ENCODE measurements at regions of chr12 and their contacts with region 1.

Region 1: GRCh38 chr12:27244684-27245488 is 800 bp downstream of the STK38L start:
- DNase-seq: no peak
- H3K4me3 ChIP-seq: peak overlapping the region; percentile 63 to 82 (median 68)
- H3K27ac ChIP-seq: peak overlapping the region; percentile 17 to 87 (median 78)
- H3K4me1 ChIP-seq: peaks cover 11 to 23% of the 10 kb centered on the region in 2 donors
- H3K27me3 ChIP-seq: no peaks in the 10 kb centered on the region
- CTCF ChIP-seq: no peak
- POLR2A ChIP-seq: no peak

Region 2: GRCh38 chr12:27064397-27065342 is 180.2 kb before region 1 on chr12:
- intact Hi-C with region 1: no loop called
- DNase-seq: no peak
- H3K4me3 ChIP-seq: no peak overlapping the region
- H3K27ac ChIP-seq: no peak overlapping the region
- H3K4me1 ChIP-seq: no peaks in the 10 kb centered on the region
- H3K27me3 ChIP-seq: no peaks in the 10 kb centered on the region
- CTCF ChIP-seq: no peak
- POLR2A ChIP-seq: no peak

Region 3: DNA sequence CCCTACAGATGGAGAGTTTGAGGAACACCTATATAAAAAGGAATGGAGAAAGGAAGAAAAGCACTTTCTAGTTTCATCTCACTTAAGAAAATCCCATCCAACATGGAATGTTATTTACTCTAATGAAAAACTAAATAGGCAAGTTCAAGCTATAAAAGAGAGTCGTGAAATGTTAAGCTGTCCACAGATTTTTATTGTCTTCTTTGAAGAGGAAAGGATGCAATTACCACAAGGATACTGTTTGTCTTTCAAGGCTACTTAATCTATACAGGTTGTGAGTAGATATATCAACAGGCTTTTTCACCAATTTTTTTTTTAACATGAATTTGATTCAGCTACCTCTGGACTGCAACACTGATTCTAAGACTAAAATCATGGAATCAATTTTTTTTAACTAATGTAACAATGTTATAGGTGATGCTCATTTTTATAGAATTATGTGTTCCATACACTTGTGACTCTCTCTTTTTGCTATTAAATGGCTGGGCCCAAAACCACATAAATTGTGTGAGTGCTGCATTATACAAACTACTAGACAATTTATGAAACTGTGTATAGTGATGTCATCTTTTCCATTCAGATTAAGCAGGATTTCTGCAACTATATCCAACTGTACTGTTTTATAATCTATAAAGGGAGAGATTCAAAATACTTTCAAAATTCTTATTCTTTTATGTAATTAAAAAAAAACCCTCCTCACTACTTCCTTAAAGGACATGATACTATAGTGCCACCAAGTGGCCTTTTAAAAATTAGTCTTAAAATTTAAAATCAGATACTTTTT is 61.0 kb after region 1 on chr12:
- intact Hi-C with region 1: loop called in 1 of 2 experiments (anchors 5 kb)
- DNase-seq: no peak
- H3K4me3 ChIP-seq: no peak overlapping the region
- H3K27ac ChIP-seq: peak overlapping the region in 1 of 5 donors; percentile 2
- H3K4me1 ChIP-seq: no peaks in the 10 kb centered on the region
- H3K27me3 ChIP-seq: no peaks in the 10 kb centered on the region
- CTCF ChIP-seq: peak; percentile 40 to 74 (median 60)
- POLR2A ChIP-seq: no peak

Region 4: DNA sequence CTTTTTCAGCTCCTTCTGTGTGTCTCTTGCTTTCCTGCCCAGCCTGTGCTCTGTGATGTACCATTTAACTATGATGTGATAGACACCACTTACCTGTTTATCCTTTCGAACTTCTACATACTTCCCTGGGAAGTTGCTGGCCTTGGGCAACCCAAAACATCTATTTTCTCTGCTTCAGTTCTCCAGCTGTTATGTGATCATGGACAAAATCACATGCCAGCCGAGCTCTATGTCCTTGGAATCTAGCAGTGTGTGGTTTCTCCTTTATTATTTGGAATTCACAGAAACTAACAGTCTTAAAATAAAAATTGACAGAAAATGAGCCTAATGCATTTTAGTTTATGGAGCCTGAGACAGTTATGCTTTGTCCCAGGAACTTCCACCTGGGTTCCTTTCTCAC is 110.6 kb after region 1 on chr12:
- intact Hi-C with region 1: no loop called
- DNase-seq: peak in 2 of 7 donors; percentile 25 to 26
- H3K4me3 ChIP-seq: no peak overlapping the region
- H3K27ac ChIP-seq: no peak overlapping the region
- H3K4me1 ChIP-seq: no peaks in the 10 kb centered on the region
- H3K27me3 ChIP-seq: no peaks in the 10 kb centered on the region
- CTCF ChIP-seq: no peak
- POLR2A ChIP-seq: no peak